Naive thymus-derived CD4-positive, alpha-beta T cell (primary cell): ENCODE measurements at regions of chr13 and their contacts with region 1.

Region 1: GRCh38 chr13:46553886-46554858 is 1.2 kb downstream of the LRCH1 start:
- DNase-seq: peak; percentile 52 to 77 (median 64)
- ATAC-seq: peak; percentile 77
- H3K4me3 ChIP-seq: peak overlapping the region; percentile 90
- H3K4me3 Mint-ChIP-seq: peak overlapping the region; percentile 92 to 99 (median 95)
- H3K27ac ChIP-seq: peak overlapping the region; percentile 82
- H3K27ac Mint-ChIP-seq: peak overlapping the region; percentile 70 to 96 (median 88)
- H3K4me1 ChIP-seq: peaks cover 26 to 29% of the 10 kb centered on the region in 2 donors
- H3K4me1 Mint-ChIP-seq: peaks cover 32 to 61% (median 55%) of the 10 kb centered on the region in 7 donors
- H3K27me3 ChIP-seq: no peaks in the 10 kb centered on the region
- H3K27me3 Mint-ChIP-seq: peaks cover 0 to 5% (median 0%) of the 10 kb centered on the region in 5 donors

Region 2: DNA sequence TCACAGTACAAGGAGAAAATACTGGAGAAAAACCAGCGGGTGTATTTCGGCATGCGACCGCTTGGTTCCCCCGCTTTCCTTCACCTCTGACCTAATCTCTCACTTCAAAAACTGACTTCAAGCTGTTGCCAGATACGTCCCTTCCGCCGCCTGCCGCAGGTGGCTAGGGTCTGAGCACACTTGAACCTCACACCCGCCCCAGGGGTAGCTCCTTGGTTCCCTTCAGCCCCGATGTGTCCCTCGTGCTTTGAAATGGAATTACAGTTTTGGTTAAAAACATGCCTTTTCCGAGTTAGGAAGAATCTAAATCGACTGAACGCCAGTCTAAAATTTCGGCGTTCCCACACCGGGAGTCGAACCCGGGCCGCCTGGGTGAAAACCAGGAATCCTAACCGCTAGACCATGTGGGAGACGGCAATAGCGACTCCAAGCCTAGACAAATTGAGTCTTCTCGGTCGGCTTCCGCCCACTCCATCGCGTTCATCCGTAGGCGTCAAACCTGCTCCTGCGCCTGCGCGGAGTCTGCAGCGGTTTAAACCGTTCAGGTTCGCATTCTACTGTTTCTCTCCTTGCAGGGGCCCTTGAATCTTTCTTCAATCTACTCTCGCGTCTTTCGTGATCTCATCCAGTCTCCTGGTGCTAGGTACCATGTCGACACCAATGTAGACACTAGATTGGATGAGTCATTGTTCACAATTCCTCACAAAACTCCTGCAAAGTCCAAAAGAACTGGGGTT is 1636.4 kb before region 1 on chr13:
- CTCF ChIA-PET with region 1: no interaction called
- POLR2A ChIA-PET with region 1: no interaction called
- intact Hi-C with region 1: loop called in 1 of 2 experiments (anchors 5 kb)
- DNase-seq: peak; percentile 95 to 98 (median 97)
- ATAC-seq: peak; percentile 85
- H3K4me3 ChIP-seq: peak overlapping the region; percentile 89
- H3K4me3 Mint-ChIP-seq: no peak overlapping the region
- H3K27ac ChIP-seq: peak overlapping the region; percentile 75
- H3K27ac Mint-ChIP-seq: no peak overlapping the region
- H3K4me1 ChIP-seq: peaks cover 5 to 9% of the 10 kb centered on the region in 2 donors
- H3K4me1 Mint-ChIP-seq: peaks cover 2 to 19% (median 7%) of the 10 kb centered on the region in 7 donors
- H3K27me3 ChIP-seq: no peaks in the 10 kb centered on the region
- H3K27me3 Mint-ChIP-seq: peaks cover 0 to 4% (median 0%) of the 10 kb centered on the region in 5 donors

Region 3: DNA sequence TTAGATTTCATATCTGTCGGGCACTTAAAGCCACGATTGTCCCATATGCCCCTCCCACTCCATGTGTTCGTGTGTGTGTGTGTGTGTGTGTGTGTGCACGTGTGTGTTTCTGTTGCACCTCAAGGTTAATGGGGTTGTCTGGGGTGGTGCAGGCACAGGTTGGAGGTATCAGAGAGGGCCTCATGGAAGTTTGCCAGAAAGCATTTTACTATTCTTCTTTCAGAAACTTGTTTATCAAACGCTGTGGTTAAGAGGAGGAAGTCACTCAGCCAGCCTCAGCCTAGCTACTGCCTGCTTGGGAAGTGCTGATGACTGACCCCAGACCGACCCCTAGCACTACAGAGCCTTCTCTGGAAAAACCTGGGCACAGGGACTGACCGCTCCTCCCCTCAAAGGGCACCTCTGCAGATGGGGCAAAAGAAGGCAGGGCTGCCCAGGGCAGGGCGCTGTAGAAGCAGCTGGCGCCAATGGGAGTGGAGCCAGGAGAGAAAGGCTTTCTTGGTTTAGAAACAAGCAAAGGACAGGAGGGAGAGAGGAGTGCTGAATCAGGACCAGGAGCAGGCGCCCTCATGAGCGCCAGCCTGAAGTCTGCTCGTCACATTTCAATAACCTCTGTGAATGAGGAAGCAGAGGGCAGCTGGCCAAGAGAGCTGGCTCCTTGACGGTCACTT is 706.5 kb before region 1 on chr13:
- CTCF ChIA-PET with region 1: no interaction called
- POLR2A ChIA-PET with region 1: no interaction called
- intact Hi-C with region 1: loop called in 1 of 2 experiments (anchors 10 kb)
- DNase-seq: peak; percentile 15 to 83 (median 78)
- ATAC-seq: peak; percentile 79
- H3K4me3 ChIP-seq: peak overlapping the region; percentile 11
- H3K4me3 Mint-ChIP-seq: peak overlapping the region; percentile 61 to 89 (median 76)
- H3K27ac ChIP-seq: peak overlapping the region; percentile 19
- H3K27ac Mint-ChIP-seq: peak overlapping the region; percentile 14 to 98 (median 90)
- H3K4me1 ChIP-seq: peaks cover 29 to 45% of the 10 kb centered on the region in 2 donors
- H3K4me1 Mint-ChIP-seq: peaks cover 38 to 66% (median 61%) of the 10 kb centered on the region in 7 donors
- H3K27me3 ChIP-seq: no peaks in the 10 kb centered on the region
- H3K27me3 Mint-ChIP-seq: peaks cover 0 to 48% (median 5%) of the 10 kb centered on the region in 5 donors

Region 4: DNA sequence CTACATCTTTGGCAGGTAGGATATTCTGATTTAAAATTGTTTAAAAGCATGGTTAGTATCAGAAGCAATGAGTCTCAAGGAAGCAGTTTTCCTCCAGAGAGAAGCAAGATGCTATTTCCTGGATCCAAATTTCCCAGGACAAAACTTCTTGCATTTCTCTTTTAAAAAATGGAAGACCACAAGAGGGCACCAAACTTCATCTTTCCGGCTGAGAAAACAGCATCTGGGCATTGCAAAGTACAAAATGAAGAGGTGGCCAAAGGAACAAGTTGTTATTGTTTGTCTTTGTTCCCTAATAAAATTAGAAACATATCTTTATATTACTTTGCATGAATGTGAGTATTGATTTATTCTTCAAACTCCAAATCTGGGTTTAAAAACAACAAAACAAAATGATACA is 61.2 kb before region 1 on chr13:
- CTCF ChIA-PET with region 1: interaction called, 5 read pairs
- POLR2A ChIA-PET with region 1: no interaction called
- intact Hi-C with region 1: loop called in 1 of 2 experiments (anchors 1 kb)
- DNase-seq: peak in 5 of 9 donors; percentile 19 to 38 (median 26)
- ATAC-seq: no peak
- H3K4me3 ChIP-seq: no peak overlapping the region
- H3K4me3 Mint-ChIP-seq: no peak overlapping the region
- H3K27ac ChIP-seq: no peak overlapping the region
- H3K27ac Mint-ChIP-seq: no peak overlapping the region
- H3K4me1 ChIP-seq: no peaks in the 10 kb centered on the region
- H3K4me1 Mint-ChIP-seq: no peaks in the 10 kb centered on the region
- H3K27me3 ChIP-seq: no peaks in the 10 kb centered on the region
- H3K27me3 Mint-ChIP-seq: peaks cover 0 to 5% (median 0%) of the 10 kb centered on the region in 5 donors

Region 5: GRCh38 chr13:46668302-46668720 is 114.1 kb after region 1 on chr13:
- CTCF ChIA-PET with region 1: no interaction called
- POLR2A ChIA-PET with region 1: no interaction called
- intact Hi-C with region 1: loop called (anchors 1 kb)
- DNase-seq: no peak
- ATAC-seq: peak; percentile 49
- H3K4me3 ChIP-seq: peak overlapping the region; percentile 55
- H3K4me3 Mint-ChIP-seq: peak overlapping the region; percentile 78 to 89 (median 84)
- H3K27ac ChIP-seq: peak overlapping the region; percentile 56
- H3K27ac Mint-ChIP-seq: peak overlapping the region; percentile 79 to 93 (median 88)
- H3K4me1 ChIP-seq: peaks cover 0 to 26% of the 10 kb centered on the region in 2 donors
- H3K4me1 Mint-ChIP-seq: peaks cover 35 to 65% (median 52%) of the 10 kb centered on the region in 7 donors
- H3K27me3 ChIP-seq: no peaks in the 10 kb centered on the region
- H3K27me3 Mint-ChIP-seq: no peaks in the 10 kb centered on the region

Region 6: DNA sequence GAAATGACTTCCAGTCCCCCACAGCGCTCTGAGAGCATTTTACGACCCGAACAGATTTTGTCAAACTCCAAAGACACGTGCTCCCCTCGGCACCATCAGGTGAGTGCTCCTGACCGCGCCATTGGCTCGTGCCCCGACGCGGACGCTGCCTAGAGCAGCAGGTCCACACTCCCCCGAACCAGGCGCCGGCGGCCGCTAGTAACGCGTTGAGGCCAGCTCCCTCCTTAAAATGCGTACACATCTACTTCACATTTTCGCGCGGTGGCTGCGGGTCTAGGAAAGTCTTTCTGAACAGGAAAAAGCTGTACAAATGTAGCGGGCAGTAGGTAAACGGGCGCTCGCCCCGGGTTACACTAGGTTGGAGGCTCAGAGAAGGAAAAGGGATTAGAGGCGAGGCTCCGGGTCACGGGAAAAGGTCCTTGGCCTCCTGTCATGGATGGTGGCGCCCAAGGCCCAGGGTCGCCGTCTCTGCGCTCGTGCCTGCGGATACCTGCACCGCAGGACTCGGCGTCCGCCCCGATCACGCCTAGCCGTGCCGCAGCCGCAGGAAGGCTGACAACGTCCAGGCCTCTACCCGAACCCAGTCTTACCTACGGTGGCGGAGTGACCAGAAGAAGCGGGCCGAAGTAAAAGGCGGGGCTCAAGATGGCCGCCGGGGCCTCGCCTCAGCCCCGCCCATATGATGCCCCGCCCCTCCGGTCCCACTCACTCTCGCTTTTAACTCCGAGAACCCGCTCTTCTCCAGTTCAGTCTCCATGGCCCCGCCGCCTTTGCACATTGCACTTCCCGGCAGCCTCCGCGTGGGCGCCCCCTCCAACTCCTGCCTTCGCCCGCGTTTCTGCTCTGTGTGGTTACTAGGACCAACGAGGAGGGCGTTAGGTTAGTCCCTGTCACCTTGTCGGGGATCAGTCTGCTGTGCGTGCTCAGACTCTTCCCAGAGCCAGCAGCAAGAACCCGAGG is 242.6 kb after region 1 on chr13 and contains the start of gene ESD:
- CTCF ChIA-PET with region 1: no interaction called
- POLR2A ChIA-PET with region 1: no interaction called
- intact Hi-C with region 1: loop called (anchors 1 kb)
- DNase-seq: peak; percentile 75 to 92 (median 85)
- ATAC-seq: peak; percentile 97
- H3K4me3 ChIP-seq: peak within 1 kb of the TSS; percentile 85
- H3K4me3 Mint-ChIP-seq: peak within 1 kb of the TSS; percentile 91 to 99 (median 93)
- H3K27ac ChIP-seq: peak within 1 kb of the TSS; percentile 82
- H3K27ac Mint-ChIP-seq: peak within 1 kb of the TSS; percentile 92 to 99 (median 98)
- H3K4me1 ChIP-seq: peaks cover 14 to 33% of the 10 kb centered on the region in 2 donors
- H3K4me1 Mint-ChIP-seq: peaks cover 20 to 53% (median 48%) of the 10 kb centered on the region in 7 donors
- H3K27me3 ChIP-seq: no peaks in the 10 kb centered on the region
- H3K27me3 Mint-ChIP-seq: peaks cover 0 to 7% (median 0%) of the 10 kb centered on the region in 5 donors
- total RNA-seq, gene ESD: 35.3 to 80.1 (median 57.0) TPM